MCF 10A (cell line): ENCODE measurements at regions of chr10 and their contacts with region 1.

Region 1: GRCh38 chr10:24255881-24256311 is 47.0 kb downstream of the KIAA1217 start:
- DNase-seq: peak; percentile 93
- H3K4me3 Mint-ChIP-seq: peak overlapping the region; percentile 84
- H3K27ac Mint-ChIP-seq: peak overlapping the region; percentile 97
- H3K4me1 Mint-ChIP-seq: peaks cover 42% of the 10 kb centered on the region
- H3K27me3 Mint-ChIP-seq: no peaks in the 10 kb centered on the region
- CTCF ChIP-seq: no peak

Region 2: DNA sequence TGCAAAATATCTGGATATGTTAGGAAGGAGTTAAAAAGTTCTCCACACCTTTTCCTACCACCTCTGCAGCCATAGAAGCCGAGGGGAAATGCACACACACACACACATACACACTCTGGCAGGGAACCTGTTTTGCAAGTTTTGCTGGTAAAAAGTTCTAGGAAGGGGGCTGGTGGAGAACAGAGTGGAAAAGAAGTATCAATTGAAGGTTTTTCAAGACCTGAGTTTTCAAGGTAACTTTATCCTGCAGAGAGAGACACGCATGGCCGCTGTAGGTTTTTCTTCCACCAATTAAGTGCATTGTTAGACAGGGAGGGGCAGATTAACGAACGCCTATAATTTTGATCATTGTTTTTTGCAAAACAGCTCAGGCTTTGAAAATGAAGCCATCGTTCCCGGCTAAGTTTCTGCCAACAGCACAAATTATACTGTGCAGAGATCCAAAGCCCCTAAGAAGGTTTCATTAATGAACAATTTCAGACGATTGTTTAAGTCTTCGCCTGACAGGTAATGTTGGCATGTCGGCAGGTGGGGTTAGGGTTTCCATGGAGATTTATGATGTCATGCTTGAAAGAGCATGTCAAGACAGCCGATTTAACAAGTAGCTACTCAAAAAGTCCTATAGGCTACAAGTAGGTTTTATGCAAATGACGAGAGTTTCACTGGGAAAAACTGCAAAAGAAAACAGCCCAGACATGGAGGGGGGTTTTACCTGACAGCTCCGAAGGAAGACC is 17.2 kb before region 1 on chr10:
- CTCF ChIA-PET with region 1: interaction called, 4 read pairs
- POLR2A ChIA-PET with region 1: interaction called, 35 read pairs
- intact Hi-C with region 1: no loop called
- DNase-seq: peak; percentile 67
- H3K4me3 Mint-ChIP-seq: peak overlapping the region; percentile 63
- H3K27ac Mint-ChIP-seq: no peak overlapping the region
- H3K4me1 Mint-ChIP-seq: peaks cover 19% of the 10 kb centered on the region
- H3K27me3 Mint-ChIP-seq: peaks cover 13% of the 10 kb centered on the region
- CTCF ChIP-seq: no peak

Region 3: GRCh38 chr10:24310104-24310503 is 54.2 kb after region 1 on chr10:
- CTCF ChIA-PET with region 1: interaction called, 6 read pairs
- POLR2A ChIA-PET with region 1: no interaction called
- intact Hi-C with region 1: loop called (anchors 10 kb)
- DNase-seq: no peak
- H3K4me3 Mint-ChIP-seq: no peak overlapping the region
- H3K27ac Mint-ChIP-seq: no peak overlapping the region
- H3K4me1 Mint-ChIP-seq: peaks cover 18% of the 10 kb centered on the region
- H3K27me3 Mint-ChIP-seq: no peaks in the 10 kb centered on the region
- CTCF ChIP-seq: no peak

Region 4: GRCh38 chr10:24360282-24361127 is 104.6 kb after region 1 on chr10:
- CTCF ChIA-PET with region 1: interaction called, 8 read pairs
- POLR2A ChIA-PET with region 1: interaction called, 5 read pairs
- intact Hi-C with region 1: loop called (anchors 1 kb)
- DNase-seq: peak; percentile 87
- H3K4me3 Mint-ChIP-seq: no peak overlapping the region
- H3K27ac Mint-ChIP-seq: no peak overlapping the region
- H3K4me1 Mint-ChIP-seq: peaks cover 6% of the 10 kb centered on the region
- H3K27me3 Mint-ChIP-seq: no peaks in the 10 kb centered on the region
- CTCF ChIP-seq: peak; percentile 71